Activated CD4-positive, alpha-beta memory T cell treated with anti-CD3 and anti-CD28 coated beads for 36 hours (primary cell): ENCODE measurements at regions of chr17 and their contacts with region 1.

Region 1: GRCh38 chr17:76191896-76192295 is 48.4 kb downstream of the RNF157 start:
- DNase-seq: peak; percentile 55
- H3K4me3 Mint-ChIP-seq: peak overlapping the region; percentile 61
- H3K27ac Mint-ChIP-seq: peak overlapping the region; percentile 97
- H3K4me1 Mint-ChIP-seq: peaks cover 59% of the 10 kb centered on the region
- H3K27me3 Mint-ChIP-seq: no peaks in the 10 kb centered on the region

Region 2: DNA sequence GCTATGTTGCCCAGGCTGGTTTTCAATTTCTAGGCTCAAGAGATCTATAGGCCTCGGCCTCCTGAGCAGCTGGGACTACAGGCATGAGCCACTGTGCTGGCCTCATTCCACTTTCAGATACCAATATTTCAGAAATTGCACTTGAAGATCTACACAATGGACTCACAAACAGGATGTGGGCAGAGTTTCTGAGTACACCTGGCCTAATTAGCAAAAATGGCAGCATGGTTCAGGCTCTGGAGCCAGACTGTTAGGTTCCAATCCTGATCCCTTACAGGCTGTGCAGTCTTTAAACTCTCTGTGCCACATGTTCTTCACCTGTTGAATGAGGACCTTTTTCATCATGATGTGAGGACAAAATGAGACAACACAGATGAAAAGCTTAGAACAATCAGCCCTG is 16.2 kb after region 1 on chr17:
- CTCF ChIA-PET with region 1: no interaction called
- POLR2A ChIA-PET with region 1: interaction called, 10 read pairs
- intact Hi-C with region 1: no loop called
- DNase-seq: no peak
- H3K4me3 Mint-ChIP-seq: no peak overlapping the region
- H3K27ac Mint-ChIP-seq: peak overlapping the region; percentile 31
- H3K4me1 Mint-ChIP-seq: peaks cover 44% of the 10 kb centered on the region
- H3K27me3 Mint-ChIP-seq: no peaks in the 10 kb centered on the region

Region 3: GRCh38 chr17:76246080-76247066 is 54.5 kb after region 1 on chr17:
- CTCF ChIA-PET with region 1: interaction called, 13 read pairs
- POLR2A ChIA-PET with region 1: interaction called, 24 read pairs
- intact Hi-C with region 1: loop called (anchors 1 kb)
- DNase-seq: peak; percentile 88
- H3K4me3 Mint-ChIP-seq: peak overlapping the region; percentile 52
- H3K27ac Mint-ChIP-seq: peak overlapping the region; percentile 90
- H3K4me1 Mint-ChIP-seq: peaks cover 49% of the 10 kb centered on the region
- H3K27me3 Mint-ChIP-seq: no peaks in the 10 kb centered on the region